Adrenal gland (tissue), 19 donors: ENCODE measurements at regions of chr3 and their contacts with region 1.

Region 1: DNA sequence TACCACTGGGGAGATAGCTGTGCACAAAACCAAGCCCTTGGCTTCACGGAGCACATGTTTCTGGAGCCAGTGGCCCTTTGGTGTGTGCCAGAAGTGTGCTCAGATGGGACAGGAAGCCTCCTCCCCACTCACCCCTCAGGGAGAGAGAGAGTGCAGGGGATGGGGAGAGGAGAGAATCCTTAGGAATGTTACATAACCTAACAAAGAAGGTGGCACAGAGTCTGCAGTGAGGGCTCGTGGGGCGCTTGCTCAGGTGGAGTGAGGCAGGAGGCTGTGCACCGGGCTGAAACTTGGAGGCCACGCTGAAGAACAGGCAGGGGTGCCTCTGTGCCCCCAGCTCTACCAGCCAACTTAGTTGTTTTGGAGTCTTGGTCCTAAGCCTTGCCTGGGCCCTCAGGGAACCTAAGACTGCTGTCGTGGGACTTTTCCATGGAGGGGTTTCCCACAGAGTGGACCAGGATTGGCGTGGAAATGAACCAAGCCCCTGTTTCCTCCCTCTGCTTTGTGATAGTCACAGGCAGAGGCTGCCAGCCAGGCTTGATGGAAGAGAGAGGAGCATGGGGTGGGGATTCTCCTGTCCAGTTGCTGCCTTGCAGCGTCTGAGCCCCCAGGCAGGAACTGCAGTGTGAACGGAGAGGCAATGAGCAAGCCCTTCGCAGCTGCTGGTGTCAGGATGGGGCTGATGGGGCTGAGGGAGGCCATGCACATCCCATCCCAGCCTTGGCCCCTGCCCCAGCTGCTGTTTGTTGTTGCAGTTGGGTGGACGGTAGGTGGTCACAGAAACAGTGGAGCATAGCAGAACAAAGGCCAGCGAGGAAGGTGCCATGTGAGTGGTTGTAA is 32.7 kb downstream of the PDIA5 start:
- DNase-seq: no peak
- H3K4me3 ChIP-seq: no peak overlapping the region
- H3K27ac ChIP-seq: peak overlapping the region in 1 of 5 donors; percentile 20
- H3K4me1 ChIP-seq: peaks cover 28 to 33% of the 10 kb centered on the region in 2 donors
- H3K27me3 ChIP-seq: no peaks in the 10 kb centered on the region
- CTCF ChIP-seq: no peak
- POLR2A ChIP-seq: no peak

Region 2: GRCh38 chr3:123147754-123148535 is 48.4 kb after region 1 on chr3:
- intact Hi-C with region 1: loop called in 1 of 2 experiments (anchors 2 kb)
- DNase-seq: peak in 1 of 7 donors; percentile 47
- H3K4me3 ChIP-seq: no peak overlapping the region
- H3K27ac ChIP-seq: peak overlapping the region in 1 of 5 donors; percentile 6
- H3K4me1 ChIP-seq: peaks cover 15 to 29% of the 10 kb centered on the region in 2 donors
- H3K27me3 ChIP-seq: no peaks in the 10 kb centered on the region
- CTCF ChIP-seq: no peak
- POLR2A ChIP-seq: no peak